CD8-positive, alpha-beta T cell (primary cell): ENCODE measurements at regions of chr7 and their contacts with region 1.

Region 1: GRCh38 chr7:92621026-92621540 is 30.9 kb upstream of the FAM133B start:
- DNase-seq: peak; percentile 53 to 92 (median 77)
- ATAC-seq: peak; percentile 93
- H3K4me3 ChIP-seq: no peak overlapping the region
- H3K4me3 Mint-ChIP-seq: peak overlapping the region; percentile 6
- H3K27ac ChIP-seq: peak overlapping the region in 1 of 2 experiments; percentile 33
- H3K27ac Mint-ChIP-seq: peak overlapping the region; percentile 79
- H3K4me1 ChIP-seq: peaks cover 18% of the 10 kb centered on the region
- H3K4me1 Mint-ChIP-seq: peaks cover 20% of the 10 kb centered on the region
- H3K27me3 ChIP-seq: no peaks in the 10 kb centered on the region
- H3K27me3 Mint-ChIP-seq: no peaks in the 10 kb centered on the region
- CTCF ChIP-seq: peak; percentile 60

Region 2: GRCh38 chr7:92412745-92413144 is 208.3 kb before region 1 on chr7:
- CTCF ChIA-PET with region 1: no interaction called
- POLR2A ChIA-PET with region 1: no interaction called
- intact Hi-C with region 1: no loop called
- DNase-seq: no peak
- ATAC-seq: no peak
- H3K4me3 ChIP-seq: no peak overlapping the region
- H3K4me3 Mint-ChIP-seq: no peak overlapping the region
- H3K27ac ChIP-seq: no peak overlapping the region
- H3K27ac Mint-ChIP-seq: no peak overlapping the region
- H3K4me1 ChIP-seq: no peaks in the 10 kb centered on the region
- H3K4me1 Mint-ChIP-seq: no peaks in the 10 kb centered on the region
- H3K27me3 ChIP-seq: no peaks in the 10 kb centered on the region
- H3K27me3 Mint-ChIP-seq: peaks cover 11% of the 10 kb centered on the region
- CTCF ChIP-seq: no peak

Region 3: DNA sequence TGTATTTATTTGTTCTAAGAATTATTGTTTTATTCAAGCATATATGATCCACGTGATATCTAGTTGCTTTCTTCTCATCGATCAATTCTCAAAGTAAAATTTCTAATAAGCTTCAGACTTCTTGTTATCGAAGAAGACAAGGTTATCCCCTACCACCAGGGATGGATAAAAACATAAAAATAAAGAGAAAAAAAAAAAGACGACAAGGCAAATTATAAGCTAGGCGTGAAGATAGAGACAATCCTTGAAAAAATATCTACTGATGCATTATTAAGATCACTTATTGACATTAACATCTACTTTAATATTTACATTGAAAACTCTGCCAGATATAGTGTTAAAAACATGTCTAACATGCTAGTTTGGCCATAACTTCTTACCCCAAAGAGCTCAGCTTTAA is 112.1 kb before region 1 on chr7:
- CTCF ChIA-PET with region 1: no interaction called
- POLR2A ChIA-PET with region 1: no interaction called
- intact Hi-C with region 1: no loop called
- DNase-seq: no peak
- ATAC-seq: no peak
- H3K4me3 ChIP-seq: no peak overlapping the region
- H3K4me3 Mint-ChIP-seq: no peak overlapping the region
- H3K27ac ChIP-seq: no peak overlapping the region
- H3K27ac Mint-ChIP-seq: no peak overlapping the region
- H3K4me1 ChIP-seq: no peaks in the 10 kb centered on the region
- H3K4me1 Mint-ChIP-seq: no peaks in the 10 kb centered on the region
- H3K27me3 ChIP-seq: no peaks in the 10 kb centered on the region
- H3K27me3 Mint-ChIP-seq: no peaks in the 10 kb centered on the region
- CTCF ChIP-seq: no peak

Region 4: GRCh38 chr7:92567460-92567859 is 53.6 kb before region 1 on chr7:
- CTCF ChIA-PET with region 1: no interaction called
- POLR2A ChIA-PET with region 1: no interaction called
- intact Hi-C with region 1: no loop called
- DNase-seq: no peak
- ATAC-seq: no peak
- H3K4me3 ChIP-seq: no peak overlapping the region
- H3K4me3 Mint-ChIP-seq: no peak overlapping the region
- H3K27ac ChIP-seq: no peak overlapping the region
- H3K27ac Mint-ChIP-seq: no peak overlapping the region
- H3K4me1 ChIP-seq: no peaks in the 10 kb centered on the region
- H3K4me1 Mint-ChIP-seq: no peaks in the 10 kb centered on the region
- H3K27me3 ChIP-seq: no peaks in the 10 kb centered on the region
- H3K27me3 Mint-ChIP-seq: no peaks in the 10 kb centered on the region
- CTCF ChIP-seq: no peak

Region 5: DNA sequence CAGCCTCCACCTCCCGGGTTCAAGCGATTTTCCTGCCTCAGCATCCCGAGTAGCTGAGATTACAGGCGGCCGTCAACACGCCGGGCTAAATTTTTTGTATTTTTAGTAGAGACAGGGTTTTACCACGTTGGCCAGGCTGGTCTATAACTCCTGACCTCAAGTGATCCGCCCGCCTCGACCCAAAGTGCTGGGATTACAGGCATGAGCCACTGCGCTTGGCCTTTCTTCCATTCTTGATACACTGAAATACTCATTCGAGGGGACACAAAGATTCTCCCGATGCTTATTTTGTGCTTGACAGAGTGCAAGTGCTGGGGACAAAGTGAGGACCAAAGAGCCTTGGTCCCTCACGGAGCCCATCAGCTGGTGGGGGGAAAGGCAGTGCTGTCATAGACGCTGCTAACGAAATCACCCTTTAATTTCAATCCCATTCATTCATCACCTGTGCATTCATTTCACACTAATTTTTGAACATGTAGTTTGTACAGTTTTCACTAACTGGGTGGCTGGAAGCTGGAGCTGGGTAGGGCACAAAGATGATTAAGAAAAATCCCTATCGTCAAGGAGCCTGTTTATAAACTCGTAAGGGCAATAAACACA is 30.3 kb before region 1 on chr7:
- CTCF ChIA-PET with region 1: interaction called, 3 read pairs
- POLR2A ChIA-PET with region 1: no interaction called
- intact Hi-C with region 1: loop called in 1 of 2 experiments (anchors 2 kb)
- DNase-seq: peak in 1 of 9 experiments; percentile 11
- ATAC-seq: no peak
- H3K4me3 ChIP-seq: peak overlapping the region; percentile 71 to 74
- H3K4me3 Mint-ChIP-seq: peak overlapping the region; percentile 96
- H3K27ac ChIP-seq: no peak overlapping the region
- H3K27ac Mint-ChIP-seq: no peak overlapping the region
- H3K4me1 ChIP-seq: peaks cover 32% of the 10 kb centered on the region
- H3K4me1 Mint-ChIP-seq: peaks cover 46% of the 10 kb centered on the region
- H3K27me3 ChIP-seq: no peaks in the 10 kb centered on the region
- H3K27me3 Mint-ChIP-seq: no peaks in the 10 kb centered on the region
- CTCF ChIP-seq: no peak

Region 6: GRCh38 chr7:92609921-92610518 is 11.1 kb before region 1 on chr7:
- CTCF ChIA-PET with region 1: interaction called, 17 read pairs
- POLR2A ChIA-PET with region 1: no interaction called
- intact Hi-C with region 1: no loop called
- DNase-seq: peak in 2 of 9 experiments; percentile 24 to 47
- ATAC-seq: no peak
- H3K4me3 ChIP-seq: no peak overlapping the region
- H3K4me3 Mint-ChIP-seq: no peak overlapping the region
- H3K27ac ChIP-seq: no peak overlapping the region
- H3K27ac Mint-ChIP-seq: no peak overlapping the region
- H3K4me1 ChIP-seq: no peaks in the 10 kb centered on the region
- H3K4me1 Mint-ChIP-seq: peaks cover 5% of the 10 kb centered on the region
- H3K27me3 ChIP-seq: no peaks in the 10 kb centered on the region
- H3K27me3 Mint-ChIP-seq: no peaks in the 10 kb centered on the region
- CTCF ChIP-seq: peak; percentile 53

Region 7: GRCh38 chr7:92691578-92691977 is 70.5 kb after region 1 on chr7:
- CTCF ChIA-PET with region 1: interaction called, 3 read pairs
- POLR2A ChIA-PET with region 1: no interaction called
- intact Hi-C with region 1: loop called (anchors 2 to 5 kb)
- DNase-seq: peak in 3 of 9 experiments; percentile 17 to 68 (median 49)
- ATAC-seq: peak; percentile 86
- H3K4me3 ChIP-seq: no peak overlapping the region
- H3K4me3 Mint-ChIP-seq: no peak overlapping the region
- H3K27ac ChIP-seq: no peak overlapping the region
- H3K27ac Mint-ChIP-seq: no peak overlapping the region
- H3K4me1 ChIP-seq: peaks cover 11% of the 10 kb centered on the region
- H3K4me1 Mint-ChIP-seq: peaks cover 30% of the 10 kb centered on the region
- H3K27me3 ChIP-seq: no peaks in the 10 kb centered on the region
- H3K27me3 Mint-ChIP-seq: no peaks in the 10 kb centered on the region
- CTCF ChIP-seq: peak; percentile 73

Region 8: GRCh38 chr7:92868683-92869293 is 247.7 kb after region 1 on chr7:
- CTCF ChIA-PET with region 1: interaction called, 4 read pairs
- POLR2A ChIA-PET with region 1: no interaction called
- intact Hi-C with region 1: loop called in 1 of 2 experiments (anchors 1 kb)
- DNase-seq: no peak
- ATAC-seq: no peak
- H3K4me3 ChIP-seq: no peak overlapping the region
- H3K4me3 Mint-ChIP-seq: no peak overlapping the region
- H3K27ac ChIP-seq: no peak overlapping the region
- H3K27ac Mint-ChIP-seq: no peak overlapping the region
- H3K4me1 ChIP-seq: no peaks in the 10 kb centered on the region
- H3K4me1 Mint-ChIP-seq: peaks cover 3% of the 10 kb centered on the region
- H3K27me3 ChIP-seq: no peaks in the 10 kb centered on the region
- H3K27me3 Mint-ChIP-seq: peaks cover 2% of the 10 kb centered on the region
- CTCF ChIP-seq: no peak

Region 9: DNA sequence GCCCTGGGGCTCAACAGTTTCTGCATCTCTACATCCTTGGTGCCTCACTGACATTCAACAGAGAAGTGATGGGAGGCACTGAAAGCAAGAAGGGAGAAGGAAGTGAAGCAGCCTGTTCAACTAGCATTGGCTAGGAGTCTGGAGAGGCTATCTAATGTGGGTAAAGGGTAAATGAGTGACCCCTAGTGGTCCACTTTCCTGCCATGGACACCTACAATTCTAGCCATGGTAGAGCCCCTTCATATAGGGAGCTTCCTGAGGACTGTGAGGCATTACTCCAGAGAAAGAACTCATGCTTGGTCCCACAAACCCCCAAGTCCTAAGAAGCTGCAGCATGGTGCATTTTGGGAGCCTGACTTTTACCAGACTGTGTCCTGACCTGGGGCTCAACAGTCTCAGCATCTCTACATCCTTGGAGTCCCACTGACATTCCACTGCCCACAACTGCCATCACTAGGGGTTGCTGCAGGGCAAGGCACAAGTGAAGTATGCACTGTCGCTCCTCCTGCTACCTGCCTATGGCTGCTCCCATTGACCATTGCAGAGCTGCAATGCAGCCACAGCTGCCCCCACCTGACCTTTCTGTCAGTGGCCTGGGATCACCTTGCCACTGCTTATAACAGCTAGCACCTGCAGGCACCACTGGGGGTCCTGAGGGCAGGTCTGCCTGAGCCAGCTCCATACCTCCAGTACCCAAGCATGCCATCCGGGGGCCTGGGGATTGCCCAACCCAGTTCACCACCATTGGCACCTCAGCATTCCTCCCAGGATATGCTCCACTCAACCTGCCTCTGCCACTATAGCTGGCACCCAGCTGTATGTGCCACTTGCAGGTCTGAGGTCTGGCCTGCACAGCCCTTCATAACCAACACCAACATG is 259.4 kb after region 1 on chr7:
- CTCF ChIA-PET with region 1: interaction called, 3 read pairs
- POLR2A ChIA-PET with region 1: no interaction called
- intact Hi-C with region 1: loop called in 1 of 2 experiments (anchors 1 kb)
- DNase-seq: peak in 2 of 9 experiments; percentile 29 to 43
- ATAC-seq: no peak
- H3K4me3 ChIP-seq: no peak overlapping the region
- H3K4me3 Mint-ChIP-seq: no peak overlapping the region
- H3K27ac ChIP-seq: no peak overlapping the region
- H3K27ac Mint-ChIP-seq: no peak overlapping the region
- H3K4me1 ChIP-seq: peaks cover 13% of the 10 kb centered on the region
- H3K4me1 Mint-ChIP-seq: peaks cover 22% of the 10 kb centered on the region
- H3K27me3 ChIP-seq: no peaks in the 10 kb centered on the region
- H3K27me3 Mint-ChIP-seq: no peaks in the 10 kb centered on the region
- CTCF ChIP-seq: no peak

Region 10: DNA sequence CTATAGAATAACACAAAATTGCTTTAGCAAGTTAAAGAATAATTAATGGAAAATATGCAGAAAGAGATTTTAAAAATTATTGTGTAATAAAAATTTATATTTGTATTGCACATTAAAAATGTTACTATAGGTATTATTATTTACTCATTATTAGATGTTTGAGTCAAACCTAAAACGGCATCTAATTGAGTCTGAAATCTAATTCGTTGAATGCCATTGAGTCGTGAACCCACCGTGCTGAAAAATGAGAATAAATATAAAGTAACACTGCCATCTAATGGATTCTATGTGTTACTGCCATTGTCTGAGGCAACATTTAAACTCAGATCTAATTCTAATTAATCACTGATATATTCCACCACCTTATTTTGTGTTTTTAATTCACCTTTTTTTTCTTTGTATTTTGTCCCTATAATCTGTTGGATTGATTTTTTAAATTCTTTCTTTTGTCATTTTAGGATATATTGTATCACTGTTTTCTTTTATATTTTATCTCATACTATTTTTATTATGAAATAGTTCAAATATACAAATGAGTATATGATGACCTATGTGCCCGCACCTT is 434.5 kb after region 1 on chr7:
- CTCF ChIA-PET with region 1: interaction called, 16 read pairs
- POLR2A ChIA-PET with region 1: no interaction called
- intact Hi-C with region 1: loop called (anchors 1 kb)
- DNase-seq: peak in 2 of 9 experiments; percentile 49 to 65
- ATAC-seq: peak; percentile 79
- H3K4me3 ChIP-seq: no peak overlapping the region
- H3K4me3 Mint-ChIP-seq: no peak overlapping the region
- H3K27ac ChIP-seq: no peak overlapping the region
- H3K27ac Mint-ChIP-seq: no peak overlapping the region
- H3K4me1 ChIP-seq: no peaks in the 10 kb centered on the region
- H3K4me1 Mint-ChIP-seq: no peaks in the 10 kb centered on the region
- H3K27me3 ChIP-seq: no peaks in the 10 kb centered on the region
- H3K27me3 Mint-ChIP-seq: no peaks in the 10 kb centered on the region
- CTCF ChIP-seq: peak; percentile 98